PC-3 (cell line): ENCODE measurements at regions of chr3 and their contacts with region 1.

Region 1: GRCh38 chr3:88058591-88059368 is at the starts of genes CGGBP1 and ZNF654:
- DNase-seq: peak; percentile 99
- ATAC-seq: peak; percentile 91
- H3K4me3 ChIP-seq: peak within 1 kb of the TSS; percentile 96
- H3K27ac ChIP-seq: peak within 1 kb of the TSS; percentile 71
- H3K4me1 ChIP-seq: peaks cover 29% of the 10 kb centered on the region
- H3K27me3 ChIP-seq: no peaks in the 10 kb centered on the region
- CTCF ChIP-seq: no peak
- total RNA-seq, gene CGGBP1: 27.0 and 37.1 TPM in 2 replicates
- total RNA-seq, gene ZNF654: 5.0 and 6.9 TPM in 2 replicates

Region 2: GRCh38 chr3:88113311-88114162 is 54.8 kb after region 1 on chr3:
- CTCF ChIA-PET with region 1: interaction called, 4 read pairs
- POLR2A ChIA-PET with region 1: no interaction called
- intact Hi-C with region 1: loop called (anchors 1 kb)
- DNase-seq: peak; percentile 86
- ATAC-seq: peak; percentile 97
- H3K4me3 ChIP-seq: no peak overlapping the region
- H3K27ac ChIP-seq: no peak overlapping the region
- H3K4me1 ChIP-seq: no peaks in the 10 kb centered on the region
- H3K27me3 ChIP-seq: no peaks in the 10 kb centered on the region
- CTCF ChIP-seq: peak; percentile 93

Region 3: GRCh38 chr3:88149509-88150362 is 91.0 kb after region 1 on chr3 and contains the start of gene C3orf38:
- CTCF ChIA-PET with region 1: no interaction called
- POLR2A ChIA-PET with region 1: no interaction called
- intact Hi-C with region 1: loop called (anchors 1 kb)
- DNase-seq: peak; percentile 94
- ATAC-seq: peak; percentile 87
- H3K4me3 ChIP-seq: peak within 1 kb of the TSS; percentile 90
- H3K27ac ChIP-seq: peak within 1 kb of the TSS; percentile 90
- H3K4me1 ChIP-seq: peaks cover 17% of the 10 kb centered on the region; the same call in 1 of the 2 replicates
- H3K27me3 ChIP-seq: no peaks in the 10 kb centered on the region
- CTCF ChIP-seq: no peak
- total RNA-seq, gene C3orf38: 15.7 and 24.3 TPM in 2 replicates

Region 4: DNA sequence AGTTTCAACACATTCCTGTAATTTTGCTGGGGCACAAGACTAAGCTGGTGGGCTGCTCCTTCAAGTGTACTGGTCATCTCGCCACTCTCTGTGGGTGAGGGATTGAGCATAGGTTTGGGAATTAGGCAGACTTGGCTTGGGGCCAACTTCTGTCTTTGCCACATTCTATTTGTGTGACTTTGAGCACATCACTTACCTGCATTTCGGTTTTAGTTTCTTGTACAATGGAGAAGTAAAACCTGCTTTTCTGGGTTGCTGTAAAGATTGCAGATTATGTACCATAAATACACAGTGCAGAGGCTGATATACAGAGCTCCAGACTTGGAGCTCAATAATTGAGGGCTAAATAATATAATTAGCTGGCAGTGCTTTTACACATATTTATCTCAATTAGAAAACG is 253.0 kb after region 1 on chr3:
- CTCF ChIA-PET with region 1: no interaction called
- POLR2A ChIA-PET with region 1: no interaction called
- intact Hi-C with region 1: no loop called
- DNase-seq: no peak
- ATAC-seq: no peak
- H3K4me3 ChIP-seq: no peak overlapping the region
- H3K27ac ChIP-seq: no peak overlapping the region
- H3K4me1 ChIP-seq: no peaks in the 10 kb centered on the region
- H3K27me3 ChIP-seq: peaks cover 26% of the 10 kb centered on the region
- CTCF ChIP-seq: no peak